ENCODE measurements at regions of chr16 and their contacts with region 1.

Region 1: DNA sequence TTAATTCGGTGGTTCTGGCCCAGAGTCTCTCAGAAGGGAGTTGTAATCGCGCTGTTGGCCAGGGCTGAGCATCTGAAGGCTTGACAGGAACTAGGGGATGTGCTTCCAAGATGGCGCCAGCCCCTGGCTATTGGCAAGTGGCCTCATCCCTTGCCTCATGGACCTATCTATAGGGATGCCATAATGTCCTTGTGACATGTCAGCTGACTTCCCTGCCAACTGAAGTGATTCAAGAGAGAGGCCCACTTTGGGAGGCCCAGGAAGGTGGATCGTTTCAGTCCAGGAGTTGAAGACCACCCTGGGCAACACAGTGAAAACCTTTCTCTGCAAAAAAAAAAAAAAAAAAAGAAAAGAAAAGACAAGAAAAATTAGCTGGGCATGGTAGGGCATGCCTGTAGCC is 15.0 kb upstream of the C16orf87 start:
- DNase-seq: no peak
- ATAC-seq: no peak
- H3K4me3 ChIP-seq: no peak overlapping the region
- H3K4me3 Mint-ChIP-seq: no peak overlapping the region
- H3K27ac ChIP-seq: no peak overlapping the region
- H3K27ac Mint-ChIP-seq: no peak overlapping the region
- H3K4me1 ChIP-seq: no peaks in the 10 kb centered on the region
- H3K4me1 Mint-ChIP-seq: no peaks in the 10 kb centered on the region
- H3K27me3 ChIP-seq: peaks cover 0 to 32% of the 10 kb centered on the region in 2 experiments
- H3K27me3 Mint-ChIP-seq: peaks cover 4 to 8% of the 10 kb centered on the region in 2 donors

Region 2: DNA sequence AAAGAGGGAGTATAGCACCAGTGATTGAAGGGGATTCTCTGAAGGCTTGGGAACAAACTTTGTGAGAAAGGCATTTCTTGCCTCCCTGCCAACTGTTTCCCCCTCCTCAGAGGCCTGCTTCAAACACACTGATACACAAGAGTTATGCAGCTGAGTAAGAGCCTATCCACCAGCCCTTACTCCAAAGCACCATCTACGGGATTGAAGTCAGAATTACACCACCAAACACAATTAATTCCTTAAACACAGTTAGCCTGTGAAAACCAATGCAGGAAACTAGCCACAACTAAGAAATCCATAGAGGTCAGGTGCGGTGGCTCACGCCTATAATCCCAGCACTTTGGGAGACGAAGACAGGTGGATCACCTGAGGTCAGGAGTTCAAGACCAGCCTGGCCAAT is 363.1 kb before region 1 on chr16:
- CTCF ChIA-PET with region 1: no interaction called
- POLR2A ChIA-PET with region 1: no interaction called
- DNase-seq: no peak
- ATAC-seq: no peak
- H3K4me3 ChIP-seq: no peak overlapping the region
- H3K4me3 Mint-ChIP-seq: no peak overlapping the region
- H3K27ac ChIP-seq: no peak overlapping the region
- H3K27ac Mint-ChIP-seq: no peak overlapping the region
- H3K4me1 ChIP-seq: no peaks in the 10 kb centered on the region
- H3K4me1 Mint-ChIP-seq: no peaks in the 10 kb centered on the region
- H3K27me3 ChIP-seq: no peaks in the 10 kb centered on the region
- H3K27me3 Mint-ChIP-seq: no peaks in the 10 kb centered on the region

Region 3: DNA sequence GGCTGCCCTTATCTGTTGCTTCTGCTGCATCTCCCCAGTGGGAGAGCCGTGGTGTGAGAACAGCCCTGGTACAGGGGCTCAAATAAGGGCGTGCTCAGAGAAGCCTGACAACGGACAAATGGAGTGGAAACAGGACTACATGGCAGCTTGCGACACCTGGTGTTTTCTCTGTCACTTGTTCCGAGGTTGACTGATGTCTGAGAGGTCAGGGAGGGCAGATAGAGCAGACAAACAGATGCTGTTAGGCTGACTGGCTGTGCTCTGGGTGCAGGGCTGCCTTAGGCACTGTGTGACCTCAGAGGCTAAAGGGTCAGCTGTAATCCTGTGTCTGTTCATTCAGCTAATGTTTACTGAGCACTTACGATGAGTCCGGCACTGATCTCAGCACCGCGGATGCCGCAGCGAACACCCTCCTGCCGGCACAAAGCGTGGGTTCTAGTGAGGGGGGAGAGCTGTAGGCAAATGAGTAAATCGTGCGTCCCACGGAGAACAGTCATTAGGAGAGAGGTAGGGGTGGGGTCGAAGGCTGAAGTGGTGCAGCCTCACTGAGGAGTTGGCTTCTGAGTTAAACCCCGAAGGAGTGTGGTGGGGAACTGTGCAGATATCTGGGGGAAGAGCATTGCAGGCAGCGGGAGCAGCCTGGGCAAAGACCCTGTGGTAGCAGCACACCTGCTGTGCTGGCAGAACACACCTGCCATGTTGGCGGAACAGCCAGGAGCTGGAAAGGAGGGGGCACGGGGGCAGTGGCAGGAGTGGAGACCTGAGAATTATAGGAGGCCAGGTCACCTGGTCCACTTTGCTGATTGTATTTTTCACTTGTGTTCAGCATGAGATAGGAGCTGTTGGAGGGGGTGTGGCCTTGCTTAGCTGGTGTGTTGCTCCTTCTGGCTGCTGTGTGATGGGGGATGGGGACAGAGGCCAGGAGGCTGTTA is 73.2 kb after region 1 on chr16:
- CTCF ChIA-PET with region 1: no interaction called
- POLR2A ChIA-PET with region 1: interaction called in 1 of 2 experiments, 12 read pairs
- DNase-seq: no peak
- ATAC-seq: peak in 2 of 4 experiments; percentile 12 to 19
- H3K4me3 ChIP-seq: no peak overlapping the region
- H3K4me3 Mint-ChIP-seq: no peak overlapping the region
- H3K27ac ChIP-seq: no peak overlapping the region
- H3K27ac Mint-ChIP-seq: no peak overlapping the region
- H3K4me1 ChIP-seq: no peaks in the 10 kb centered on the region
- H3K4me1 Mint-ChIP-seq: no peaks in the 10 kb centered on the region
- H3K27me3 ChIP-seq: peaks cover 0 to 3% of the 10 kb centered on the region in 2 experiments
- H3K27me3 Mint-ChIP-seq: no peaks in the 10 kb centered on the region

Region 4: GRCh38 chr16:47018223-47018891 is 172.4 kb after region 1 on chr16:
- CTCF ChIA-PET with region 1: no interaction called
- POLR2A ChIA-PET with region 1: no interaction called
- DNase-seq: peak in 26 of 35 experiments; percentile 1 to 62 (median 13)
- ATAC-seq: peak; percentile 74 to 87 (median 84)
- H3K4me3 ChIP-seq: no peak overlapping the region
- H3K4me3 Mint-ChIP-seq: no peak overlapping the region
- H3K27ac ChIP-seq: no peak overlapping the region
- H3K27ac Mint-ChIP-seq: no peak overlapping the region
- H3K4me1 ChIP-seq: peaks cover 5 to 17% of the 10 kb centered on the region in 2 experiments
- H3K4me1 Mint-ChIP-seq: peaks cover 17 to 23% (median 18%) of the 10 kb centered on the region in 3 donors
- H3K27me3 ChIP-seq: no peaks in the 10 kb centered on the region
- H3K27me3 Mint-ChIP-seq: no peaks in the 10 kb centered on the region

Region 5: GRCh38 chr16:47979164-47979520 is 1133.2 kb after region 1 on chr16:
- CTCF ChIA-PET with region 1: no interaction called
- POLR2A ChIA-PET with region 1: no interaction called
- DNase-seq: no peak
- ATAC-seq: no peak
- H3K4me3 ChIP-seq: no peak overlapping the region
- H3K4me3 Mint-ChIP-seq: no peak overlapping the region
- H3K27ac ChIP-seq: no peak overlapping the region
- H3K27ac Mint-ChIP-seq: no peak overlapping the region
- H3K4me1 ChIP-seq: no peaks in the 10 kb centered on the region
- H3K4me1 Mint-ChIP-seq: no peaks in the 10 kb centered on the region
- H3K27me3 ChIP-seq: peaks cover 0 to 4% of the 10 kb centered on the region in 2 experiments
- H3K27me3 Mint-ChIP-seq: peaks cover 10 to 11% of the 10 kb centered on the region in 2 donors